Dorsolateral prefrontal cortex (tissue), 120 donors: ENCODE measurements at regions of chr3 and their contacts with region 1.

Region 1: GRCh38 chr3:42443819-42444436 is 33.5 kb upstream of the LYZL4 start:
- DNase-seq: peak; percentile 76 to 94 (median 88)
- H3K4me3 ChIP-seq: no peak overlapping the region
- H3K27ac ChIP-seq: peak overlapping the region in 2 of 59 donors; percentile 8 to 39
- H3K27me3 ChIP-seq: no peaks in the 10 kb centered on the region
- CTCF ChIP-seq: peak; percentile 84 to 100 (median 97)

Region 2: GRCh38 chr3:41893977-41894376 is 550.0 kb before region 1 on chr3:
- intact Hi-C with region 1: loop called in 1 of 2 experiments (anchors 10 kb)
- DNase-seq: peak in 1 of 10 donors; percentile 22
- H3K4me3 ChIP-seq: no peak overlapping the region
- H3K27ac ChIP-seq: no peak overlapping the region
- H3K27me3 ChIP-seq: no peaks in the 10 kb centered on the region
- CTCF ChIP-seq: peak; percentile 23 to 86 (median 59)

Region 3: DNA sequence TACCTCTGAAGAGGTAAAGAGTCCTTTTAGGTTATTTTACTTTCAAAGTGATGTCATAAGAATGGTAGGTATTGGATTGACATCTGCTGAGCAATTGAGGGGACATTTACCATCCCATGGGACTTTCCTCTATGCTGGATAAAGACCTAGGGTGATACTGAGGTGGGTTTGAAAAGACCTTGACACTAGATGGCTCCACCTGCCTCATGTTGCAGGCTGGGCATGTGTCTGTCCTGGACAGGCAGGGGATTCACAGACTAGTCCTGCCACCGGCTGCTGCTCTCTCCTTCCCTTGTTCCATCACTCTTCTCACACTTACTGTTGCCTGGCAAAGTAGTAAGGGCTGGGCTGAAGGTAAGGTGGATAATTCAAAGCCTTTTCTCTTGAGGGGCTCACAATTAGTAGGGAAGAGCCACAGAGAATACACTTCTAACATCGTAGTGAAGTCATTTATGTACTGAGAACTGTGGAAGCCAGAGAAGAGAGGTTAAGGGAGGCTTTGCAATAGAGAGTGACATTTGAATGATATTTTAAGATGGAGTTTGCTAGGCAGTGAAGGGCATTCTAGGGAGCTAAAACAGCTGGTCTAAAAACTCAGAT is 325.1 kb before region 1 on chr3:
- intact Hi-C with region 1: loop called (anchors 5 kb)
- DNase-seq: peak in 4 of 10 donors; percentile 49 to 70 (median 57)
- H3K4me3 ChIP-seq: no peak overlapping the region
- H3K27ac ChIP-seq: peak overlapping the region in 13 of 59 donors; percentile 1 to 64 (median 27)
- H3K27me3 ChIP-seq: no peaks in the 10 kb centered on the region
- CTCF ChIP-seq: peak in 55 of 56 donors; percentile 22 to 78 (median 57)

Region 4: DNA sequence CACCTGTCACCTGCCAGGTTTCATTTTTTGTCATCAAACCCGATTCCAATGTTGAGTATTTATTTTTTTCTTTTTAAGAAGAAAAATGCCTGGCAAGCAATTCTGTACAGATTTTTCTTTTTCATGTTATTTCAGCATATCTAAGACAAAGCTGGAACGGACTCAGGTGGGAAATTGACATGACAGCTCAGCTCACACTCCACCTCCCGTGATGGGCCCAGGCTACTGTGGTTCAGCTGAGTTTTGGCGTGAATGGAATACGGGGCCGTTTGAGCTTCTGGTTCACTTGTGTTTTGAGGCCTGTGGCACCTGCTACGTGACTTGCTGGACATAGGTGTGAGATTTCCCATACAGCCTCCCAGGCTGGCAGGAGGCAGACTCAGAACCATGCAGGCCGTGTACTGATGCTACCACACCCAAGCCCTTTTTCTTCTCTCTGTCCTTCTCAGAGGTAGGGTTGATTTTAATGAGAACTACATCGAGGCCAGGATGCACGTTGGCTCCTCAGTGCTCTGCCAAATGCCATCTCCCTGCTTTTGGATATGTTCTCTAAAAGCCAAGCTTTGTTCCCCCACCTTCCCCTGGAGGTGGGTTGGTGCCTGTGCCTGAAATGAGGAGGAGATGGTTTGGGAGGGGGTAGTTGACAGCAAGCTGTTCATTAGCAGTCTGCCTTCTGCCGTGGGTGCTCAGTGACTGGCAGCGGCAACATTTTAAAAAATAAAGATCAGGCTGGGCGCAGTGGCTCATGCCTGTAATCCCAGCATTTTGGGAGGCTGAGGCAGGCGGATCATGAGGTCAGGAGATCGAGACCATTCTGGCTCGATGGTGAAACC is 304.1 kb before region 1 on chr3:
- intact Hi-C with region 1: no loop called
- DNase-seq: peak in 1 of 10 donors; percentile 29
- H3K4me3 ChIP-seq: no peak overlapping the region
- H3K27ac ChIP-seq: peak overlapping the region in 27 of 59 donors; percentile 1 to 67 (median 40)
- H3K27me3 ChIP-seq: no peaks in the 10 kb centered on the region
- CTCF ChIP-seq: no peak

Region 5: DNA sequence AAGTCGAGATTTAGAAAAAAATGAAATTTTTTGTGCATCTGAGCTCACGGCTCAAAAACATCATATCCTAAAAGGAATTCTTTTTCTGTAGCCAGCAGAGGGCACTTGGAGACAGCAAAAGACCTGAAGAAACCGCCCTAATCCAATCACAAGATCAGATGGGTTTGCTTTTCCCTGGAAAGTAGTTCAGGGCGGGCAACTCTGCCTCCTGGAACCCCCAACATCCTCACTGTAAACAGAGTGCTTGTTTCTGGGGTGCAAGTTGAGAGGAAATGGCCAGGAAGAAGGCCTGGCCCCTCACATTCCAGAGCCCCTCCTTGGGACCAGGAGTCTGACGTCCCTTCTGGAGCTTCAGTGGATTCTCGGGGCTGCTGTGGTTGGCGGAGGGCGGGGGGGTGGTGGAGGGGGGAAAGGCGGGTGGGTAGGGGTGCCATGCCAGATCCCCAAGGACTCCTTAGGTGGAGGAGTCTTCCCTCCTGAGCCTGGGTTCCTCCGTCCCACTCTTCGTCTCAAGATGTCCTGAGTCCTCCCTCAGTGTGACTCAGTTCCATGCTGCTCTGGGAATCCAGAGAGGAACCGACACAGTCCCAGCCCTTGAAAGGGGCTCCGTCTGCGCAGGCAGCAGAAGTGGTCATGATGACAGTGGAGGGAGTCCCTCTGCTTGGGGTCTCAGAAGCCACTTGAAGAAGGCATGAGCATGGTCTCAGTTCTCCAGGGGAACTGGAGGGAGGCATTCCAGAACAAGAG is 213.8 kb before region 1 on chr3:
- intact Hi-C with region 1: loop called (anchors 5 kb)
- DNase-seq: no peak
- H3K4me3 ChIP-seq: peak overlapping the region in 42 of 59 donors; percentile 4 to 56 (median 30)
- H3K27ac ChIP-seq: peak overlapping the region in 17 of 59 donors; percentile 7 to 73 (median 41)
- H3K27me3 ChIP-seq: peaks cover 0 to 4% (median 0%) of the 10 kb centered on the region in 45 donors
- CTCF ChIP-seq: peak; percentile 23 to 82 (median 67)

Region 6: DNA sequence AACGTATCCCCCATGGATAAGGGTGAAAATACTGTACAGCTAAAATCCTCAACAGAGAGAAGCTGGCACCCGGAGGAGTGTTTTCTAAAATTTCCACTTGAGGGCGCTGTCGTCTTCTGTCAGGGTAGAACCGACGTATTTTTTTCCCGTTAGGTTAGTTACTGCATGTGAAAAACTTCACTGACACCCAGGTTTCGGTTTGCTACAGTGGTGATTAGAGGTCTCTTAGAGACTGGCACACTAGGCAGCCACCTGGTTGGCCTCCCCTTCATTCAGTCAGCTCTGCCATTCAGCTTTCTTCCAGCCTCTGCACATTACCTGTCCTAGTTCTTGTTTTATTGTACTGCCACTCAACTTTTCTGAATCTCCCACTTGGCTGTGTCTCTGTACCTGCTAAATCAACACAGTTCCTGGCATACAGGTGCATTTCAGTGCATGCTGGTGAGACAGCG is 196.3 kb before region 1 on chr3:
- intact Hi-C with region 1: loop called (anchors 2 to 5 kb)
- DNase-seq: peak in 6 of 10 donors; percentile 47 to 76 (median 65)
- H3K4me3 ChIP-seq: peak overlapping the region in 14 of 59 donors; percentile 1 to 41 (median 12)
- H3K27ac ChIP-seq: no peak overlapping the region
- H3K27me3 ChIP-seq: no peaks in the 10 kb centered on the region
- CTCF ChIP-seq: peak; percentile 61 to 92 (median 82)

Region 7: GRCh38 chr3:42376344-42376798 is 67.6 kb before region 1 on chr3:
- intact Hi-C with region 1: loop called in 1 of 2 experiments (anchors 2 kb)
- DNase-seq: peak in 8 of 10 donors; percentile 36 to 78 (median 64)
- H3K4me3 ChIP-seq: no peak overlapping the region
- H3K27ac ChIP-seq: peak overlapping the region in 46 of 59 donors; percentile 2 to 85 (median 54)
- H3K27me3 ChIP-seq: no peaks in the 10 kb centered on the region
- CTCF ChIP-seq: no peak

Region 8: DNA sequence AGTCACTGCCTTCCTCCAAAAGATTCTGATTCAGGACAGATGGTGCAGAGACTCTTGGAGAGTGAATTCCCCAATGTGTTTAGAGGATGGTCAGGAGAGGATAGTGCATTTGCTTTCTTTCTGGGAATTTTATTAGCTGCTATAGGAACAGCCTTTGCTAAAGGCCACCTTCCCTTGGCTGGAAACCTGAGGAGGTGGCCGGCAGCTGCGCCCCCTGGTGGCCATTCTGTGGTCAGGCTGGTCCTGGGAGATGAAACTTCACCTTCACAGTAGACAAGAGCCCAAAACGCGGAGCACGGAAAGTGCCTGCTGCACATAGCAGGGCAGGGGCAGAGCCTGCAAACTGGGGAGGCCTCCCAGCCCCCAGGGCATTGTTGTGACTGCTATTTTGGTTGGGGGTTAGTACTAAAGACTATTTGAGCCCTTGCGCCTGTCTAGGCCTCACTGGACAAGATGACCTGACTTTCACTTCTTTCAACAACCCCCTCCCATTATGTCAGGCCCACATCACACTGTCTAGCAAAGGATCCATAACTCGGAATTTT is 103.5 kb after region 1 on chr3:
- intact Hi-C with region 1: loop called in 1 of 2 experiments (anchors 10 kb)
- DNase-seq: peak in 9 of 10 donors; percentile 67 to 85 (median 74)
- H3K4me3 ChIP-seq: no peak overlapping the region
- H3K27ac ChIP-seq: peak overlapping the region in 29 of 59 donors; percentile 3 to 59 (median 32)
- H3K27me3 ChIP-seq: no peaks in the 10 kb centered on the region
- CTCF ChIP-seq: peak; percentile 88 to 99 (median 96)

Region 9: GRCh38 chr3:42613462-42613861 is 169.5 kb after region 1 on chr3:
- intact Hi-C with region 1: no loop called
- DNase-seq: no peak
- H3K4me3 ChIP-seq: no peak overlapping the region
- H3K27ac ChIP-seq: peak overlapping the region in 29 of 59 donors; percentile 1 to 66 (median 25)
- H3K27me3 ChIP-seq: no peaks in the 10 kb centered on the region
- CTCF ChIP-seq: peak; percentile 16 to 65 (median 48)